Psoas muscle (tissue), 8 donors: ENCODE measurements at regions of chr5 and their contacts with region 1.

Region 1: DNA sequence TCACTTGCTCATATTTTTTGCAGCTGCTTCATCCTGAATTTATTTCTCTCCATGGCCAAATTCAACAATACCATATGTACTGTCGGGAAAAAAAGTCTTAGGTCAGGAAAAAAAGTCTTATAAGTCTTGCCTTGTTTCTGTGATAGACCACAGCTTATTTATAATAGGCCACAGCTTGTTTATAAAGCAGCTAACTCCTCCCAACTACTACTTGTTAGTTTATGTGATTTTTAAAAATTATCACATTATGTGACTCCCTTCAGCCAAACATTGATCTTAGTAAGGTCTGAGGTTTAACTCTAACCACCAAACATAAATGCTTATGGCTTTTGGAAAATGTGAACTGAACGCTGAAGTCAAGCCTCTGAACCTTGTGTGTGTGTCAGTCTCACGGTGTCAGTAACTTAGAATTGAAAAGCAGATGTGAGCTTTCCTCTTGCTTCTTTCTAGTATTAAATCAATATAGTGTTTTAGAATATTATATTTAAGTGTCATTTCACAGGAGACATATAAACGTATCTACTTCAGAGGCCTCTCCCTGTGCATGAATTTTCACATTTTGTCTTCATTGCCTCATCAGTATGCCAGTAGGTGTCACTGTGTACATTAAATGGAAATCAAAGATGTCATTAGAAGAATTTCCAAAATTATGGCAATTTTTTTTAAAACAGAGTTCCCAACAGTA is 51.3 kb downstream of the SNX24 start:
- DNase-seq: no peak
- ATAC-seq: no peak
- H3K4me3 ChIP-seq: no peak overlapping the region
- H3K27ac ChIP-seq: no peak overlapping the region
- H3K4me1 ChIP-seq: no peaks in the 10 kb centered on the region
- H3K27me3 ChIP-seq: no peaks in the 10 kb centered on the region
- CTCF ChIP-seq: peak; percentile 60

Region 2: DNA sequence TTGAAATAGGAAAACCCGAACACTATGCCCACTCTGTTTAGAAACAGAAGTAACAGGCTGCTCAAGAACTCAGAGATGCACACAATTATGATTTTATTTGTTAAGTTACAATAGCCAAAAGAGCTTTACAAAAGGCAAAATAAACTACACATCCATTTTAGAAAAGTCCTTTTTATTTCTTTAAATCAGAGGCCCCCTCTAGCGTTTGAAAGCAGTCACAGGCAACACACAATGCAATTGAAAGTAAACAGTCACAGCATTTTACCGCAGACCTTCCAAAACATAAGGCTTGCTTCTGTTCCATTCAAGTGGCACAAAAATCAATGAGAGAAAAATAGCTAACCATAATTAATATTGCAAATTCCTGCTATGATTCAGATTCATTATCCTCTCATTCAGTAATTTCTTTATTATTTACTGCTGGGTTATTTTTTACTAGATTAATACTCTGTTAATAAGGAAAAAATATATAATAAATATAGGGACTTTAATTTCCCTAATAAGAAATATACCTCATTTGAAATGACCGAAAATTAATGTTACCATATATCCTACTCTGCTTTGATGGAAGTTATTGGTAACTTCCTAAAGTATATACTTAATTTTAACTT is 448.2 kb after region 1 on chr5:
- intact Hi-C with region 1: loop called in 1 of 2 experiments (anchors 5 kb)
- DNase-seq: no peak
- ATAC-seq: no peak
- H3K4me3 ChIP-seq: no peak overlapping the region
- H3K27ac ChIP-seq: no peak overlapping the region
- H3K4me1 ChIP-seq: no peaks in the 10 kb centered on the region
- H3K27me3 ChIP-seq: no peaks in the 10 kb centered on the region
- CTCF ChIP-seq: peak; percentile 46

Region 3: GRCh38 chr5:123371575-123372179 is 474.9 kb after region 1 on chr5:
- intact Hi-C with region 1: loop called in 1 of 2 experiments (anchors 5 kb)
- DNase-seq: peak; percentile 51 to 65
- ATAC-seq: no peak
- H3K4me3 ChIP-seq: no peak overlapping the region
- H3K27ac ChIP-seq: no peak overlapping the region
- H3K4me1 ChIP-seq: no peaks in the 10 kb centered on the region
- H3K27me3 ChIP-seq: no peaks in the 10 kb centered on the region
- CTCF ChIP-seq: peak; percentile 39